ENCODE measurements at regions of chr11 and their contacts with region 1.

Region 1: DNA sequence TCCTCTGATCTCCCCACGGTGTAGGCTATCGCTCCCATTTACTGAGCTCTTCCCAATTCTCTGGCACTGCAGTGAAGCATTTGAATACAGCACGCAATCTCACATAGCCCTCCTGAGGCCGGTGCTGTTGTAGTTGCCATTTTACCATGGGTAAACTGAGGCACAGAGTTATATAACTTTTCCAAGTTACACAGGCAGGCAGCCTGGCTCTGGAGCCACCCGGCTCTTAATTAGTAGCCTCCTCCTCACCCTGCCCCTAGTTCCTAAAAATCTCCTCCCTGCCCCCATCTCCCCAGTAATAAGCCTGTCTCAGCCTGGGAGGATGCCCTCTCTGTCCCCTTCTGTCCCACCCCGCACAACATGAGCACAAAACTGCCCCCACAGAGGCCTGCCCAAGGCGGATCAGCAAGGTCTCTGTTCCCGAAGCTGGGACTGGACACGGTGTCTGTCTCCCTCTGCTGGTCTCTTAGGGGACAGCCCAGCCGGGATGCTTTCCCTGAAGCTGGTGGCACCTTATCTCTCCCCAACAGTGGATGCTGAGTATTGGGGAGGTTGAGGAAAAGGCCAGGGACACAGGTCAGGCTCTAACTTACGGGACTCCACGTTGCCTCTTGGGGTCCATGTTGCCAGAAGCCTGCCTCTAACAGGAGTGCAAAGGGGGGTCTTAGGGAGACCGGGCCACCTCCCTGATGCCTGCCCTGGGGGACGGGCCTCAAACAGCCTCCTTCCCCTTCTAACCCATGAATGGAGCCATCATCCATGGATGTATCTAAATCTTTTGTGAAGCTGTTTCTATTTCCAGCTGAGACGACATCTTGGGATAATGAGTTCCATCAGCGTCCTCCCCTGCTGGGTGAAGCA is 9.1 kb upstream of the CLCF1 start:
- DNase-seq: peak; percentile 72
- ATAC-seq: peak; percentile 86
- H3K4me3 ChIP-seq: no peak overlapping the region
- H3K27ac ChIP-seq: peak overlapping the region; percentile 34
- H3K4me1 ChIP-seq: peaks cover 44% of the 10 kb centered on the region
- H3K27me3 ChIP-seq: no peaks in the 10 kb centered on the region
- CTCF ChIP-seq: peak; percentile 99

Region 2: GRCh38 chr11:67265633-67266423 is 116.7 kb before region 1 on chr11:
- CTCF ChIA-PET with region 1: interaction called, 5 read pairs
- POLR2A ChIA-PET with region 1: no interaction called
- in situ Hi-C with region 1: no loop called
- intact Hi-C with region 1: loop called (anchors 10 kb)
- DNase-seq: no peak
- ATAC-seq: peak; percentile 83
- H3K4me3 ChIP-seq: peak overlapping the region in 1 of 2 experiments; percentile 37; a peak in 2 of 4 replicates
- H3K27ac ChIP-seq: peak overlapping the region; percentile 64
- H3K4me1 ChIP-seq: peaks cover 48% of the 10 kb centered on the region
- H3K27me3 ChIP-seq: no peaks in the 10 kb centered on the region
- CTCF ChIP-seq: peak; percentile 94; the same call in 1 of the 2 replicates

Region 3: DNA sequence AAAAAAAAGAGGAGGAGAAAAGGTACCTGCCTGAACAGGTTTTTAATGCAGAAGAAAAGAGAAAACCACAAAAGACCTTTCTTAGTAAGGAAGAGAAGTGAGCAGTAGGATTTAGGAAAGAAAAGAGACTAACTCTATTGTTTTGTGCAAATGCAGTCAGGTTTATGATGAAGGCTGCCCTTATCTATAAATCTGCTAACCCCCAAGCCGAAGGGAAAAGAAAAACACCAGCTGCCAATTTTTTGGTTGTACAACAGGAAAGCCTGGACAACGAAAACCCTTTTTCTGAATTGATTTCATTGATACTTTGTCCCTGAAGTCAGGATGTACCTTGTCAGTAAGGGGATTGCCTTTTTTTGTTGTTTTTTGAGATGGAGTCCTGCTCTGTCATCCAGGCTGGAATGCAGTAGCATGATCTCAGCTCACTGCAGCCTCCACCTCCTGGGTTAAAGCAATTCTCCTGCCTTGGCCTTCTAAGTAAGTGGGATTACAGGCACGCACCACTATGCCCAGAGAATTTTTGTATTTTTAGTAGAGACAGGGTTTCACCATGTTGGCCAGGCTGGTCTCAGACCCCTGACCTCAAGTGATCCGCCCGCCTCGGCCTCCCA is 50.3 kb before region 1 on chr11:
- CTCF ChIA-PET with region 1: interaction called, 6 read pairs
- POLR2A ChIA-PET with region 1: interaction called, 14 read pairs
- in situ Hi-C with region 1: no loop called
- intact Hi-C with region 1: no loop called
- DNase-seq: no peak
- ATAC-seq: no peak
- H3K4me3 ChIP-seq: no peak overlapping the region
- H3K27ac ChIP-seq: no peak overlapping the region
- H3K4me1 ChIP-seq: no peaks in the 10 kb centered on the region
- H3K27me3 ChIP-seq: no peaks in the 10 kb centered on the region
- CTCF ChIP-seq: no peak

Region 4: GRCh38 chr11:67345920-67346799 is 36.3 kb before region 1 on chr11:
- CTCF ChIA-PET with region 1: interaction called, 207 read pairs
- POLR2A ChIA-PET with region 1: no interaction called
- in situ Hi-C with region 1: no loop called
- intact Hi-C with region 1: loop called (anchors 5 kb)
- DNase-seq: peak; percentile 89
- ATAC-seq: peak; percentile 75
- H3K4me3 ChIP-seq: no peak overlapping the region
- H3K27ac ChIP-seq: no peak overlapping the region
- H3K4me1 ChIP-seq: peaks cover 4% of the 10 kb centered on the region; the same call in 1 of the 2 replicates
- H3K27me3 ChIP-seq: no peaks in the 10 kb centered on the region
- CTCF ChIP-seq: peak; percentile 94

Region 5: DNA sequence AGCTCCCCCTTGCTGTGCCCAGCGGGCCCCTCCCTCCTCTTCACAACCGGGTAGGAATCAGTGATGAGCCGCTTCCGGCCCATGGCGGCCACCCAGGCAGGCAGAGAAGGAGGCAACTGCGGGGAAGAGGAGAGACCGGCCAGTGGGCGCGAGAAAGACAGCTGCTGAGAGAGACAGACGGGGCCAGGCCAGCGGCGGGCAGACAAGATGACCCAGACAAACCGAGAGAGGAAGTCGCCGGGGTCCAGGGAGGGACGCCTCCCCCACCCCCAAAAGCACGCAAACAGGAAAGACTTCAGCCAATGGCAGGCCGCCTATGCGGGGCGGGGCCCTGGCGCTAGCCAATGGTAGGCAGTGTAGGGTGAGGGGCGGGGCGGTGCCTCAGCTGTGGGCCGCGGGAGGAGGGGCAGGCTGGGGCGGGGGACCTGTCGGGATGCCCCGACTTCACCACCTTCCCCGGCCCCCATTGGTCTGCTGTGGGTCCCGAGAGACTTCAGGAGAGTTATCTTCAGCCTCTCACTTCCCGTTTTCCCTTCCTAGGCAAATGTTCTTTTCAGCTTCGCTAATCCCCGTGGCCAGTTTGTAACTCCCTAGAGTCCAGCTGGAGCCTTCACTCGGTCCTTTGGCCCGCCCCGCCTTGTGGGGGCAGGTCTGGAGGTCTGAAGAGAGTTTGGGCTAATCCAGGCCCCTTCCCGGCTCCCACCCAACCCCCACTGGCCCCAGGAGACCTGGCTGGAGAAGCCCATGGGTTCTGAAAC is 29.0 kb before region 1 on chr11 and contains the start of gene POLD4:
- CTCF ChIA-PET with region 1: interaction called, 207 read pairs
- POLR2A ChIA-PET with region 1: interaction called, 9 read pairs
- in situ Hi-C with region 1: no loop called
- intact Hi-C with region 1: loop called (anchors 1 kb)
- DNase-seq: no peak
- ATAC-seq: peak; percentile 87
- H3K4me3 ChIP-seq: peak within 1 kb of the TSS; percentile 67 to 74
- H3K27ac ChIP-seq: peak within 1 kb of the TSS; percentile 94
- H3K4me1 ChIP-seq: peaks cover 63% of the 10 kb centered on the region
- H3K27me3 ChIP-seq: no peaks in the 10 kb centered on the region
- CTCF ChIP-seq: no peak
- total RNA-seq, gene POLD4: 78.7 TPM

Region 6: GRCh38 chr11:67558084-67558781 is 175.7 kb after region 1 on chr11:
- CTCF ChIA-PET with region 1: interaction called, 12 read pairs
- POLR2A ChIA-PET with region 1: no interaction called
- in situ Hi-C with region 1: no loop called
- intact Hi-C with region 1: no loop called
- DNase-seq: no peak
- ATAC-seq: peak; percentile 29
- H3K4me3 ChIP-seq: no peak overlapping the region
- H3K27ac ChIP-seq: no peak overlapping the region
- H3K4me1 ChIP-seq: peaks cover 6% of the 10 kb centered on the region
- H3K27me3 ChIP-seq: no peaks in the 10 kb centered on the region
- CTCF ChIP-seq: no peak

Region 7: DNA sequence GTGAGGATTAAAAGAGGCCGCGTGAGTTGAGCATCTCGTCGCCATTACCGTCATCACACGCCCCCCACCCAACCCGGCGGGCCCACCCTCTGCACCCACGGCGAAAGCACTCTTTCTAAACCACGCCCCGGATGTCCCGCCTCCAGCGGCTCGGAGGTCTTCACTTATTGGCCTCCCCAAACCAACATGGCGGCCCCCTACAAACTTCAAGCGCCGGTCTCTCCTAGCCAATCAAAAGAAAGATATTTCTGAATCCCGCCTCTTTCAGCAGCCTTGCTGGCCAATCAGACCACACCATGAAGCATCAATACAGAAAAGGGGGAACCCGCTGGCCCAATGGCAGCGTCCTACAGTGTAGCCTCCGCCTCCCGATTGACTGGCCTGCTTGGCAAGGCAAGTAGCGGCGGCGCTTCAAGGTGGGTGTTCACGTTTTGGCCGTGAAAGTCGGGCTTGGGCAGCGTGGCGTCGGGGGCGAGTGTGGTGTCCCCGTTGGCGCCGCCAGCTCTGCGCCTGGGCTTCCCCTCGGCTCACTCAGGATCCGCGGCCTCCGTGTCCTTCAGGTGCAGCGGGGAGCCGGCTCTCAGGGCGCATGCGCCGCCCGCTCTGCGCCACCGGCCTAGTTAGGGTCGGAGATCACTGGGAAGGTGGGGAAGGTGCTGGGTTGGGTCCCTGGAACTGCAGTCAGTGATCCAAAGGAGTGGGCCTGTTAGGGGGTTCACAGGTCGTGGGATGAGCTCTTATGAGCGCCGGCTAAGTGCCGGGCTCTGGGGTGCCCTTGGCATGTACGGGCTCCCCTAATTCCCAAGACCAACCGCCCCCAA is 648.0 kb after region 1 on chr11 and contains the start of gene NDUFS8:
- CTCF ChIA-PET with region 1: no interaction called
- POLR2A ChIA-PET with region 1: no interaction called
- in situ Hi-C with region 1: no loop called
- intact Hi-C with region 1: no loop called
- DNase-seq: peak; percentile 98
- ATAC-seq: peak; percentile 94
- H3K4me3 ChIP-seq: peak within 1 kb of the TSS; percentile 89 to 91
- H3K27ac ChIP-seq: peak within 1 kb of the TSS; percentile 98
- H3K4me1 ChIP-seq: peaks cover 31% of the 10 kb centered on the region
- H3K27me3 ChIP-seq: no peaks in the 10 kb centered on the region
- CTCF ChIP-seq: no peak
- total RNA-seq, gene NDUFS8: 289 TPM

Region 8: DNA sequence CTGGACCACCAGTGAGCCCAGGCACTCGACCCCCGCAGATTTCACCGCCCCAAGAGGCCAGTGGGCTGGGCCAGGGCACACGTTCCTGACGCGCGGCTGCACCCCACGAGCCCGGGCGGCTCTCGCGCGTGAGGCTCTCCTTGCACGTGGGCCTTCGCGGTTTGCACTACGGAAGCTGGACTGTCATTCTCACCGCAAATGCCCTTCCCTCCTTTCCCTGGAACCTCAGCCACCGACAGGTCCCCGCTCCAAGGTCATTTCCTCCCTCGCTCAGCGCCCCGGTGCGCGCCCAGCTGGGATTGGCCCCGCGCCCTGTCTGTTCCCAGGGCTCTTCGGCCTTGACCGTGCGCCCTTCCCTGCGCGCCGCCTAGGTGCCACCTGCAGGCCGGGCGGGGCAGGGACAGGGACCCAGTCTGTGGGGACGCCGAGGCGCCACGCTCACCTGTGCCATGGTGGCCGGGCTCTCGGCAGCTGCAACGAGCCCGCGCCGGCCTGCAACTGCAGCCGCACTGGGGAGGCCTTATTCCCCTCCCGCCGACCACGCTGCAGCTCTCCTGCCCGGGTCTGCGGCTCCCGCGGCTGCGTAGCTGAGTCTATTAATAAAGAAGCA is 1461.3 kb after region 1 on chr11:
- CTCF ChIA-PET with region 1: interaction called, 10 read pairs
- POLR2A ChIA-PET with region 1: no interaction called
- in situ Hi-C with region 1: no loop called
- intact Hi-C with region 1: no loop called
- DNase-seq: no peak
- ATAC-seq: peak; percentile 84
- H3K4me3 ChIP-seq: peak overlapping the region; percentile 46 to 70
- H3K27ac ChIP-seq: peak overlapping the region; percentile 78
- H3K4me1 ChIP-seq: peaks cover 16% of the 10 kb centered on the region
- H3K27me3 ChIP-seq: no peaks in the 10 kb centered on the region
- CTCF ChIP-seq: peak; percentile 96

Measured in Panc1 (cell line).